HepG2 (cell line): ENCODE measurements at regions of chr1 and their contacts with region 1.

Region 1: GRCh38 chr1:70171512-70171911 is 33.9 kb downstream of the LRRC40 start:
- DNase-seq: no peak
- ATAC-seq: no peak
- H3K4me3 ChIP-seq: no peak overlapping the region
- H3K27ac ChIP-seq: no peak overlapping the region
- H3K4me1 ChIP-seq: no peaks in the 10 kb centered on the region
- H3K27me3 ChIP-seq: no peaks in the 10 kb centered on the region
- CTCF ChIP-seq: no peak
- EP300 ChIP-seq: no peak
- POLR2A ChIP-seq: no peak
- RAD21 ChIP-seq: no peak

Region 2: GRCh38 chr1:70190180-70190579 is 18.7 kb after region 1 on chr1:
- CTCF ChIA-PET with region 1: no interaction called
- POLR2A ChIA-PET with region 1: no interaction called
- in situ Hi-C with region 1: no loop called
- intact Hi-C with region 1: loop called (anchors 2 kb)
- DNase-seq: no peak
- ATAC-seq: no peak
- H3K4me3 ChIP-seq: no peak overlapping the region
- H3K27ac ChIP-seq: no peak overlapping the region
- H3K4me1 ChIP-seq: no peaks in the 10 kb centered on the region
- H3K27me3 ChIP-seq: no peaks in the 10 kb centered on the region
- CTCF ChIP-seq: no peak
- EP300 ChIP-seq: no peak
- POLR2A ChIP-seq: no peak
- RAD21 ChIP-seq: no peak